ENCODE measurements at regions of chr2 and their contacts with region 1.

Region 1: DNA sequence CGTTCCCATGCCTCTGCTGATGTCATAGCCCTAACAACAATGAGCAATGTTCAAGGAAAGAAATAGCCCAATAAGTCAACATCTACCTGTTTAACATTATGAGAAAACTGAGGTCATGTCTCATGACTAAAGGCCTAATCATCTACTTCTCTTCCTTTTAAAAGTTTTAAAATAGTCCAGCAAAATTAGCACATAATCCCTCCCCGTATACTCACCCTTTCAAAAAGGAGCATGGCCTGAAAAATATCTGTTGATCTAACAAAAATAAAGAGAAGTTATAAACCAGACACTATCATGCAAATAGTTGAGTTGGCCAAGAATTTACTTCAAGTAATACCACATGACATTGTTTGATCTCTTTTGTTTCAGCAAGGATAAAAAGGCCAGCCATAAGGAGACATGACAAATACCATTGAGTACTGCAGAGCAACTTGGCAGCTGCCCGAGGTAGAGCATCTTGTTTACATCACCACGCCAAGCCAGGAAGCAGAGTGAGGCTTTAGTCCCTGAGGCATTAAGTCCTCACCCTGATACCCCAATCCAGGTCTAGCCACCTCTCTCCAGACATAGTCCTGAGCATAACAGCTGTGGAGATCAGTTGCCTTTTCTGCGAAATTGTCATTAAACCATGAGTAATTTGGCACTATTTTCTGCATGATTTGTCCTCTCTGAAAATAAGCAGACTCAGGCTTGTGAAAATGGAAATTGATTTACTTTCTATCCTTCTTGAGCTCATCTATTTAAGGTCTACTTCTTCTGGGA is 137.4 kb upstream of the ETAA1 start:
- DNase-seq: no peak
- H3K4me3 ChIP-seq: no peak overlapping the region
- H3K27ac ChIP-seq: peak overlapping the region in 1 of 2 donors; percentile 51
- H3K4me1 ChIP-seq: no peaks in the 10 kb centered on the region
- H3K27me3 ChIP-seq: no peaks in the 10 kb centered on the region
- CTCF ChIP-seq: no peak
- POLR2A ChIP-seq: no peak

Region 2: DNA sequence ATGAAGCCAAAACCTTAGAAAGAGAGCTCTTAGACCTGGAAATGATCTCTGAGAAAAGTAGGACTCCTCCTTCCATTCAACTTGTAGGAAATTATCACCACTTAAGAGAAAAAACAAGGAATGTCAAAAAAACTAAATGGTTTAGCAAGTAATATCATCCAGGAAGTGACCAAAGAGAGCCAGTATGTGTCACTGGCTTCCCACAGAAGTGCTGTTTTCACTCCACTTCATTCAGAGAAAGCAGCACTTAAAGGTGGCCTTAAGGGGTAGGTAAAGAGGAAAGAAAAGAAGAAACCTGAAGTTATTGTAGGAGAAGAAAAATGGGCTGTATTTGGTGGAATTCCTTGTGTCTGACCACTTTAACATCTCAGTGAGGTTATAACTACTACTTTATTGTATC is 277.0 kb before region 1 on chr2:
- intact Hi-C with region 1: loop called (anchors 10 kb)
- DNase-seq: no peak
- H3K4me3 ChIP-seq: no peak overlapping the region
- H3K27ac ChIP-seq: no peak overlapping the region
- H3K4me1 ChIP-seq: no peaks in the 10 kb centered on the region
- H3K27me3 ChIP-seq: no peaks in the 10 kb centered on the region
- CTCF ChIP-seq: no peak
- POLR2A ChIP-seq: no peak